Left cardiac atrium (tissue), 4 donors: ENCODE measurements at regions of chr21 and their contacts with region 1.

Region 1: DNA sequence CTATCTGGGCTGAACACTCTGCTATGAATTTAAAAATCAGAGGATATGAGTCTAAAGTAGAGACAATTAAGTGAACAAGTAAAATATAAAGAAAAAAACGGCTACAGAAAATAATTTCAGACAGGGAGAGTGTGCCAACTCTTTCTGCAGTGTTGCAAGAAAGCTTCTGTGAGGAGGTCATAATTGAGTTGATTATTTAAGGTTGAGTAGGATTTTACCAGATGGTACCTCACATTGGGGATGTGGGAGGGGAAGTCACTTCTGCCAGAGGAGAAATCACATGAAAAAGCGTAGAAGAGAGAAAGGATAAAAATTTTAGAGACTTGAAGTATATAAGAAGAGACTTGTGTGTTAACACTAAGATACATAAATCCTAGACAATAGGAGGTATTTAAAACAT is 238.0 kb upstream of the NCAM2 start:
- DNase-seq: no peak
- ATAC-seq: no peak

Region 2: GRCh38 chr21:20701235-20701634 is 59.0 kb before region 1 on chr21:
- intact Hi-C with region 1: loop called in 1 of 2 experiments (anchors 10 kb)
- DNase-seq: no peak
- ATAC-seq: no peak

Region 3: DNA sequence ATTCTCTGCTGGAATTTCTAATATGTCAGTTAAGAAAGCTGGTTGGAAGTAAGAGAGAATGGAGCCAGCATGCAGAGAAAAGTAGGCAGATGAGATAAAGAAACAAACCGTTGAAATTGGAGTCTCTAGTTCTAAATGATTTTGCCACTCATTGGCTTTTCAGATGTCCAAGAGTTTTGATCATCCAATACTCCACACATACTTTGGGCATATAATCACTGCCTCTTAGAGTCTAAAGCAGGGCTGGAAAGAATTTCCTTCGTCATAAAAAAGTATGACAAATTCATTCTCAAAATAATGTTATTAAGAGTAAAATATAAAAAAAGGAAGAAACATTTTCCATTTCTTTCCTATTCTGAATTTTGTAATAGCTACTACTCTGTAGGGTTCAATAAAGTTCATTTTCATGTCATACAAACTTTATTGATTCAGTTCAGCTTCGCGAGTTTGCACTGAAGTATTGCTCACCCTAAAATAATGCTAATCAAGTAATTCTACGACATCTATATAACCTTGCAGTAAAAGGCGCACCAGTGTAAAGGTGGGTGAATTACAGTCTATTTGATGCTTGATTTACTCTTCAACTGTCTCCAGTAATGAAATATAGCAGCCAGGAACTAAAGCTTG is 1794.6 kb after region 1 on chr21:
- intact Hi-C with region 1: no loop called
- DNase-seq: no peak
- ATAC-seq: peak in 1 of 2 donors; percentile 29